Ovary (tissue), 10 donors: ENCODE measurements at regions of chr16 and their contacts with region 1.

Region 1: DNA sequence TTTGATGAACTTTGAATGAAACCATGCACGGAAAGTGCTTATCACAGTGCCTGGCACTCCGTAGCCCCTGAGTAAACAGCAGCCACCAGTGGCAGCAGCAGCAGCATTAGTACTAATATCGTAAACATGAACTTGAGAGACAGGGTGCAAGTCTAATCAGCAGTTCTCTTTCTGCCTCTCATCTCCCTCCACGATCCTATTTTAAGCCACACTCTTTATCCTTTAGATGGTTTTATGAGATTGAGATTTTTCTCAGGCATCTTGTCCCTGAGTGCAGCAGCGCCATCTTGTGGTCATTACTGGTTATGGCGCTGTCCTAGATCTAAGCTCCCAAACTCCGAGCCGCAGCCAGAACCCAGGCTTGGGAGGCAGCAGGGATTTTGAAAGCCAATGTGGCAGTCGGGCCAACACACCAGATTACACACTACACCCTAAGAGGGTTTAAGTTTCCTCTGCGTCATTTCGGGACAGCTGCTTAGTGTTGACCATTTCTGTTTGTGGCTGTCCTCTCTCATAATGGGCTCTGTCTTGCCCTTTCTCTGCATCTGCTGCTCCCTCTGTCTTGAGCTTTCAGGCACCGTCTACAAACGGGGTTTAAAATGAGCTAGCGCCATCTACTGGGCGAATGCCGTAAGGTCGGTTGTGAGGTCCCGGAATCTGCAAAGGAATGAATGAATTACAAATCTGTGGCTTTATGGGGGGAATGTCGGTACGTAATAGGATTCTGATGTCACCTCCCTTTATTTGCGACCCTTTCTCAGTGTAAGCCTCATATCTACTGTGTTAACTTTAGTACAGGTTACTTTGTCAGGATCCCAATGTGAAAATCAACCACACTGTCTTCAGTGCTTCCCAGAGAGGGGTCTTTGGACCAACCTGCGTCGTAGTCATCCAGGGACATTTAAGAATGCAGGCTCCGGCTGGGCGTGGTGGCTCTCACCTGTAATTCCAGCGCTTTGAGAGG is 64.5 kb downstream of the CYLD start:
- DNase-seq: peak; percentile 75 to 85 (median 82)
- H3K4me3 ChIP-seq: peak overlapping the region; percentile 28
- H3K27ac ChIP-seq: peak overlapping the region in 1 of 2 donors; percentile 48
- H3K4me1 ChIP-seq: no peaks in the 10 kb centered on the region
- H3K27me3 ChIP-seq: no peaks in the 10 kb centered on the region
- CTCF ChIP-seq: peak; percentile 62 to 86 (median 80)
- EP300 ChIP-seq: no peak
- POLR2A ChIP-seq: no peak

Region 2: DNA sequence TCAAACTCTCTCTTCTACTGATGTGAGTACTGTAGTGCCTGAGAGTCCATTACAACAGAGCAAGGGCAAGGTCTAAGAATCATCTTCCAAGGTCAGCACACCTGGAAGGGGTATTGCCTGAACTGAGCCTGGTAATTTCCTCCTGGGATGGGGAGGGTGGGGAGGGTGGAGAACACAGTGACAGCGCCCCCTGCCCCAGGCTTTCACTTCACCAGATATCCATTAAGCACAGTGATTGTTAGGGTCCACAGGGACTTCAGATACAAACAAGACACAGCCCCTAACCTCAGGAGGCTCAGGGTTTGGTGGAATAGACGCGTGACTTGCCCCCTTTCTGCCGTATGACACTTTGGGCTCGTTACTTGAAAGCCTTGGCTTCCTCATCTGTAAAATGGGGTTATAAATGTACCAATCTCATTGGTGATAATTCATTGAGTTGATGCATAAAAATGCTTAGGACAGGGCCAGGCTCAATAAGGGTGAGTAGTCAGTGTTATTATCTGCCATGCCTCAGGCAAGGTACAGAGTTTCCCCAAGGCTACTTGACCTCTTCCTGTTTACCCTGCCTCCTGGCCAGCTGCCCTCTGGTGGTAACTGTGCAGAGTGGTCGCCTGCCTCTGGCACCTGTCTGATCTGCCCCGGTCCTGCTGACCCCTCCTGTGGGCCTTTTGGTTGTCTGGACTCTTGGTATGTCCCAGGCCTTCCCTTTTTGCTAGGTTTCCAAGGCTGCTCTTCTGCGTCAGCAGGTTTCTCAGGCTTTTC is 424.5 kb before region 1 on chr16:
- intact Hi-C with region 1: loop called in 2 of 4 experiments (anchors 10 kb)
- DNase-seq: no peak
- H3K4me3 ChIP-seq: no peak overlapping the region
- H3K27ac ChIP-seq: no peak overlapping the region
- H3K4me1 ChIP-seq: no peaks in the 10 kb centered on the region
- H3K27me3 ChIP-seq: no peaks in the 10 kb centered on the region
- CTCF ChIP-seq: no peak
- EP300 ChIP-seq: no peak
- POLR2A ChIP-seq: no peak

Region 3: GRCh38 chr16:50671644-50672260 is 134.6 kb before region 1 on chr16:
- intact Hi-C with region 1: loop called in 1 of 4 experiments (anchors 10 kb)
- DNase-seq: no peak
- H3K4me3 ChIP-seq: no peak overlapping the region
- H3K27ac ChIP-seq: no peak overlapping the region
- H3K4me1 ChIP-seq: no peaks in the 10 kb centered on the region
- H3K27me3 ChIP-seq: no peaks in the 10 kb centered on the region
- CTCF ChIP-seq: no peak
- EP300 ChIP-seq: no peak
- POLR2A ChIP-seq: no peak